Mammary epithelial cell (primary cell): ENCODE measurements at regions of chr2 and their contacts with region 1.

Region 1: GRCh38 chr2:233251306-233252116 is at the start of gene ATG16L1:
- DNase-seq: peak; percentile 95
- H3K4me3 ChIP-seq: peak within 1 kb of the TSS; percentile 79 to 99 (median 92)
- H3K27ac ChIP-seq: peak within 1 kb of the TSS; percentile 70
- H3K4me1 ChIP-seq: peaks cover 34% of the 10 kb centered on the region
- H3K27me3 ChIP-seq: no peaks in the 10 kb centered on the region
- CTCF ChIP-seq: peak; percentile 75 to 96
- total RNA-seq, gene ATG16L1: 33.3 to 39.2 TPM

Region 2: GRCh38 chr2:232611551-232612218 is 639.8 kb before region 1 on chr2:
- CTCF ChIA-PET with region 1: no interaction called
- dilution Hi-C with region 1: no loop called
- in situ Hi-C with region 1: no loop called
- intact Hi-C with region 1: loop called (anchors 1 kb)
- DNase-seq: peak; percentile 79
- H3K4me3 ChIP-seq: no peak overlapping the region
- H3K27ac ChIP-seq: no peak overlapping the region
- H3K4me1 ChIP-seq: peaks cover 16% of the 10 kb centered on the region
- H3K27me3 ChIP-seq: no peaks in the 10 kb centered on the region
- CTCF ChIP-seq: peak; percentile 88 to 89

Region 3: GRCh38 chr2:232854082-232854481 is 397.4 kb before region 1 on chr2:
- CTCF ChIA-PET with region 1: no interaction called
- dilution Hi-C with region 1: no loop called
- in situ Hi-C with region 1: loop called (anchors 10 to 25 kb)
- intact Hi-C with region 1: loop called (anchors 1 kb)
- DNase-seq: peak; percentile 77
- H3K4me3 ChIP-seq: no peak overlapping the region
- H3K27ac ChIP-seq: no peak overlapping the region
- H3K4me1 ChIP-seq: peaks cover 15% of the 10 kb centered on the region
- H3K27me3 ChIP-seq: no peaks in the 10 kb centered on the region
- CTCF ChIP-seq: no peak

Region 4: DNA sequence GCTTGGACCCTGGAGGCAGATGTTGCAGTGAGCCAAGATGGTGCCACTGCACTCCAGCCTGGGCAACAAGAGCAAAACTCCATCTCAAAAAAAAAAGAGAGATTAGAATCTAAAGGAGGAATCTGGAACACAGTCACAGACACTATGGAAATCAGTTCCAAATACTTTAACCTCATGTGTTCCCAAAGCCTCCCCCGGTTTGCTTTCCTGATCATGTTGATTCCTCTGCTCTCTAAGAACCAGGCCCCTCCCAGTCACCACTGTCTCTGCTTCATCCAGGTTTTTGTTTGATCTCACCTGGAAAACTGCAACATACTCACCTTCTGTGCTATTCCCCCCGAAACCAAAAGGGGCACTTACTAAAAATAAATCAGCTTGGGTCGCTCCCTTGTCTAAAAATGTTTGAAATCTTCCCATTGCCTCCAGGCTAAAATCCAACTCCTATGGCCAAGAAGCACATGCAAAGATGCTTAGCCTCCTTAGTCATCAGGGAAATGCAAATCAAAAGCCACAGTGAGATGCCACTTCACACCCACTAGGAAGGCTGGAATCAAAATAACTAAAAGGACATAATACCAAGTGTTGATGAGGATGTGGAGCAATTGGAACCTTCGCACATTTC is 225.2 kb before region 1 on chr2:
- CTCF ChIA-PET with region 1: interaction called, 8 read pairs
- dilution Hi-C with region 1: no loop called
- in situ Hi-C with region 1: no loop called
- intact Hi-C with region 1: loop called (anchors 1 kb)
- DNase-seq: peak; percentile 73
- H3K4me3 ChIP-seq: no peak overlapping the region
- H3K27ac ChIP-seq: peak overlapping the region; percentile 22
- H3K4me1 ChIP-seq: peaks cover 15% of the 10 kb centered on the region
- H3K27me3 ChIP-seq: no peaks in the 10 kb centered on the region
- CTCF ChIP-seq: no peak

Region 5: DNA sequence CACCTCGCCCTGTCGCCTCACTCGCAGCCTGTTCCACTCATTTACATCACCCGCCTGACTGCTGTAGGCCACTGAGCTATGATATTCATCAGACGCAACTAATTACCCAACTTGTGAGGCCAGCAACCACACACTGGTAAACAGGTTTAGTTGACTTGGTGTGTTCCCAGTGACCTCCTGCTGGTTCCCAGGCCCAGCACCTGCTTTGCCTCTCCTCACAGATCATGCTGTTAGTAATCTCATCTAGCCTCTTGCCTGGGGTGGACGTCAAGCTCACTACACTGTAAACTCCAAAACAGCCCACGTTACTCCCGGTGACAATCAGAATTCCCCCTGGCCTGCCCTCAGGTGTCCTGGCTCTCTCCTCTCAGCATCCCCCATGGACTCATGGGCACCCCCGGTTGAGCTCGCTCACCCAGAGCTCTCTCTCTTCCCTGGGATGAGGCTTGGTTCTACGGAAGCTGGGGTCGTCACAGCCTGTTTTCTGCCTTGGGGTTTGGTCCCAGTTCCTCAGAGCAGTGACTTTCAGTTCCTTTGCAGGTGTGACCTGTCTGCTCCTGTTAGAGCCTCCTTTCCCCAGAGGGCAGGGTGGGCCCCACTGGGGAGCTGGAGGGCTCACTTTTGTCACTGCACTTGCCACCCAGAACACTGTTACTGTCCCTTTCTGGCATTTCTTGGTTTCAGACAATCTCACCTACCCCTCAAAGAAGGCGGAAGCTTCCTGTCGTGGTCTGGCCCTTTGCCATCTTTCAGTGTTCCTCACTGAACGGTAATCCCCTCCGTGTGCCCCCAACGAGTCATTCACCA is 151.1 kb before region 1 on chr2:
- CTCF ChIA-PET with region 1: no interaction called
- dilution Hi-C with region 1: no loop called
- in situ Hi-C with region 1: no loop called
- intact Hi-C with region 1: loop called (anchors 10 kb)
- DNase-seq: no peak
- H3K4me3 ChIP-seq: no peak overlapping the region
- H3K27ac ChIP-seq: no peak overlapping the region
- H3K4me1 ChIP-seq: no peaks in the 10 kb centered on the region
- H3K27me3 ChIP-seq: no peaks in the 10 kb centered on the region
- CTCF ChIP-seq: no peak

Region 6: GRCh38 chr2:233199870-233200269 is 51.6 kb before region 1 on chr2:
- CTCF ChIA-PET with region 1: no interaction called
- dilution Hi-C with region 1: no loop called
- in situ Hi-C with region 1: no loop called
- intact Hi-C with region 1: no loop called
- DNase-seq: no peak
- H3K4me3 ChIP-seq: no peak overlapping the region
- H3K27ac ChIP-seq: no peak overlapping the region
- H3K4me1 ChIP-seq: no peaks in the 10 kb centered on the region
- H3K27me3 ChIP-seq: no peaks in the 10 kb centered on the region
- CTCF ChIP-seq: no peak

Region 7: DNA sequence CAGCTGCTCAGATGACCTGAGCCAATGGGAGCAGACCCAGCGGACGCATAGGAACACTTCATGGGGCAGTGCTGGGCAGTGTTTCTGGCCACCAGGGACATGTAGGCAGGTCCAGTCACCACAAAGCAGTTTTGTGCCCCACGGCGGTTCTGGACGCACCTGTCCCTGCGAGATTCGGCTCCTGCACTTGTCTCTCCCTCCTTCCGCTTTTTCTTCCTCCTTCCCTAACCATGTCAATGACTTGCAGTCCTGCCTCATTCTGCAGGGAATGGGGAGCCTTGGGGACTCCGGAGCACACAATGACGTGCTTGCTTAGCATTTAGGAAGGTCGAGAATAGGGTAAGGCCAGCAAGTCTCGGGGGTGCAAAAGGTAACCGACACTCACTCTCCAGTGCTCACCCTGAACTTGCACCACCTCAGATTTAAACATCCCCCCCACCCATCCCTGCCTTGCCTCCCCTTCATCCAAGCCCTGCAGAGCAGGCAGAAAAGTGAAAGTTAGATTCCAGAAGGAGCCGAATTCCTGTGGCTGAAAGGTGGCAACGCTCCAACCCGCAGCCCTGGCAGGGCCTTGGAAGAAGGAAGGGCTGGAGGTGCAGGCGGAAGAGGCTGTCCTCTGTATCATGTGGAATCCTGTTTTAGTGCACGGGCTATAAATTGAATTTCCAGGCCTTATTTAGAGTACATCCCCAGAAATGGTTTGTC is 40.5 kb before region 1 on chr2:
- CTCF ChIA-PET with region 1: no interaction called
- dilution Hi-C with region 1: no loop called
- in situ Hi-C with region 1: no loop called
- intact Hi-C with region 1: loop called (anchors 2 kb)
- DNase-seq: peak; percentile 84
- H3K4me3 ChIP-seq: peak overlapping the region in 1 of 3 experiments; percentile 12
- H3K27ac ChIP-seq: no peak overlapping the region
- H3K4me1 ChIP-seq: peaks cover 44% of the 10 kb centered on the region
- H3K27me3 ChIP-seq: no peaks in the 10 kb centered on the region
- CTCF ChIP-seq: no peak

Region 8: DNA sequence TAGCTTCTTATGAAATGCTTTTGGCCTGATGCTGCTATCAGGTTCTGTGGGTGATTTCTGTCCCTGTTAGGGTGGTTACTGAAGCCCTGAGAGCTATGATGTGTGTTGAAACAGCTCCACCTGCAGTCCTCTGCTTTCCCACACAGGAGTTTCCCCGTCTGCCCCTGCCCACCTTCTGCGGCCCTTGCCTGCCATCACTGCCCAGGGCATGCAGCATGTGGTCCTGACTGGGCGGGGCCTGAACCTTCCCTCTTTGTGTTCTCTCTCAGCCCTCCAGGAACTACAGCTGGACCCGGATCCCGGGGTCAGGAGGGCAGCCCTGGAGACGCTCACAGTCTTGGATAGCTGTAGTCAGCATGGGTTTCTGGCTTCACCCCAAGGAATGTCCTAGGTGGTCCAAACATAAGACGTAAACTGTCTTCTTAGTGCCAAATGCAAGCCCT is 581.4 kb after region 1 on chr2:
- CTCF ChIA-PET with region 1: no interaction called
- dilution Hi-C with region 1: no loop called
- in situ Hi-C with region 1: no loop called
- intact Hi-C with region 1: loop called (anchors 5 kb)
- DNase-seq: peak; percentile 63
- H3K4me3 ChIP-seq: no peak overlapping the region
- H3K27ac ChIP-seq: no peak overlapping the region
- H3K4me1 ChIP-seq: peaks cover 18% of the 10 kb centered on the region
- H3K27me3 ChIP-seq: no peaks in the 10 kb centered on the region
- CTCF ChIP-seq: peak; percentile 12 to 53